ENCODE measurements at regions of chr12 and their contacts with region 1.

Region 1: GRCh38 chr12:64392221-64392620 is 1.7 kb upstream of the C12orf56 start:
- DNase-seq: no peak
- ATAC-seq: no peak
- H3K4me3 Mint-ChIP-seq: no peak overlapping the region
- H3K27ac Mint-ChIP-seq: no peak overlapping the region
- H3K4me1 Mint-ChIP-seq: peaks cover 10% of the 10 kb centered on the region
- H3K27me3 Mint-ChIP-seq: peaks cover 5% of the 10 kb centered on the region

Region 2: DNA sequence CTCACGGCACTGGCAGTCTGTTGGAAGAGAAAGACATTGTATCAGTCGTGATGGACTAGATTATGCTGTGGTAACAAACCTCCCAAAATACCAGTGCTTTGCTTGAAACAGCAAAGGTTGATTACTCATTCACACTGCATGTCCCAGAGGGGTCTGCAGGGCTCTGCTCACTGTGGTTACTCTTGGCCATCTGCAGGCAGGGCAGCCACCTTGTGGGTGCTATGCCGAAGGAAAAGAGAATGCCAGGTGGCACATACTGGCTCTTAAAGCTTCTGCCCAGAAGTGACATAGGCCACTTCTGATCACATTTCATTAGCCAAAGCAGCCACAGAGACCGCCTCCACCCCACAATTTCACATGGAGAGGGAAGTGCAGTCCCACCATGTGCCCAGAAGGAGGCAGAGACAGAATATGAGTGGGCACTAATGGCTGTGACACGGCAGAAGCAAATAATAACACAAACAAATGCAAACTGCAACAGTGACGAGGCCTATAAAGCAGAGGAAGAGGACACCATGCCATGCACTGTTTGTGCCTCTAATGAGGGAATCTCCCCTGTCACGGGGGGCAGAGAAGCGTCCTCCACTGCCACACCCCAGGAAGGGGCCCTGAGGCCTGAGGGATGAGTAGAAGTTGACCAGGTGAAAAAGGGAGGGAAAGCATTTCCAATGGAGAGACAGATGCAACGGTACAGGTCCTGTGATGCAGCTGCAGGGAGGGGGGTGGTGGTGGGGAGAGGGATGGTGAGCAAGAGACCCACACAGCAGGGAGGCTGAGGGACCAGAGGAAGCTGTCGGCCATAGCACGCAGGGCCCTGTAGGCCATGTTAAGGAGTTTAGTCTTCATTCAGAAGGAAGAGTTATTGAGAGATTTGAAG is 118.5 kb before region 1 on chr12:
- CTCF ChIA-PET with region 1: interaction called, 3 read pairs
- POLR2A ChIA-PET with region 1: no interaction called
- intact Hi-C with region 1: loop called (anchors 1 kb)
- DNase-seq: peak; percentile 44
- ATAC-seq: peak; percentile 39
- H3K4me3 Mint-ChIP-seq: no peak overlapping the region
- H3K27ac Mint-ChIP-seq: no peak overlapping the region
- H3K4me1 Mint-ChIP-seq: no peaks in the 10 kb centered on the region
- H3K27me3 Mint-ChIP-seq: no peaks in the 10 kb centered on the region

Region 3: GRCh38 chr12:64293654-64294364 is 98.4 kb before region 1 on chr12:
- CTCF ChIA-PET with region 1: no interaction called
- POLR2A ChIA-PET with region 1: no interaction called
- intact Hi-C with region 1: no loop called
- DNase-seq: no peak
- ATAC-seq: peak; percentile 26
- H3K4me3 Mint-ChIP-seq: no peak overlapping the region
- H3K27ac Mint-ChIP-seq: no peak overlapping the region
- H3K4me1 Mint-ChIP-seq: peaks cover 12% of the 10 kb centered on the region
- H3K27me3 Mint-ChIP-seq: peaks cover 14% of the 10 kb centered on the region

Region 4: DNA sequence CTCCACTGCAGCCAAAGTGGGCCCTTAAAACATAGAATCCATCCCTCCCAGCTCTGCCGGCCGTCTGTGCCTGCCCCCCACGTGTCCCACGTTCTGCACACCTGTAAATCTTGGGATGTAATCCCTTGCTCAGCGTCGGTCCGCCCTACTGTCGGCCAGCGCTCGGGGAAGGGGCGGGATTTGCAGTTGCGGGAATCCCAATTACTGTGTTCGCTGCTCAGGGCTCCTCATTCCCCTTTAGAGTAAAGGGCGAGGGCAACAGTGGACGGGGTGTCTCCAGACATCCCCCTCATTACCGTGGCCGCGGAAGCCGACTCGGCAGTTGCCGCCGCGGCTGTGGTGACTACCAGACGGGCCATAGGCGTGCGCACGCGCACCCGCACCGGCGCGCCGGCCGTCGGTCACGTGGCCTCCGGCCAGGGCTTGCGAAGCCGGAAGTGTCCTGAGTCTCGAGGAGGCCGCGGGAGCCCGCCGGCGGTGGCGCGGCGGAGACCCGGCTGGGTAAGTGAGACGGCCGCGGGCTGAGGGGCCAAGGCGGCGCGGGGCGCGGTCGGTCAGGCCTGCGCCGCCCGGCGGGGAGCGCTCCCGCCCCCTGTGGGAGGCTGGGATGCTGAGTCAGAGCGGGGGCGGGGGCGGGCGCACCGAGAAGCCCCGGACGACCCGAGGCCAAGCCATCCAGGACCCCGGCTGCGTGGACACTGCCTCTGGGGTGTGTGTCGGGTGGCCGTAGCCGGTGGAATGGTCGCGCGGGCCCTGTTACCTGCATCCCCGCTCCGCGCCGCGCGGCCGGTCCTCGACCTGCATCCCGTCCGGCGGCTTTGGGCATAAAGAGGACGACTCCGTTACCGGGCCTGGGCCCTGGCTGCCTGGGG is 59.7 kb after region 1 on chr12 and contains the start of gene TBK1:
- CTCF ChIA-PET with region 1: no interaction called
- POLR2A ChIA-PET with region 1: no interaction called
- intact Hi-C with region 1: no loop called
- DNase-seq: peak; percentile 75
- ATAC-seq: peak; percentile 64
- H3K4me3 Mint-ChIP-seq: peak within 1 kb of the TSS; percentile 89
- H3K27ac Mint-ChIP-seq: peak within 1 kb of the TSS; percentile 98
- H3K4me1 Mint-ChIP-seq: peaks cover 40% of the 10 kb centered on the region
- H3K27me3 Mint-ChIP-seq: no peaks in the 10 kb centered on the region
- total RNA-seq, gene TBK1: 14.0 to 15.4 TPM

Region 5: DNA sequence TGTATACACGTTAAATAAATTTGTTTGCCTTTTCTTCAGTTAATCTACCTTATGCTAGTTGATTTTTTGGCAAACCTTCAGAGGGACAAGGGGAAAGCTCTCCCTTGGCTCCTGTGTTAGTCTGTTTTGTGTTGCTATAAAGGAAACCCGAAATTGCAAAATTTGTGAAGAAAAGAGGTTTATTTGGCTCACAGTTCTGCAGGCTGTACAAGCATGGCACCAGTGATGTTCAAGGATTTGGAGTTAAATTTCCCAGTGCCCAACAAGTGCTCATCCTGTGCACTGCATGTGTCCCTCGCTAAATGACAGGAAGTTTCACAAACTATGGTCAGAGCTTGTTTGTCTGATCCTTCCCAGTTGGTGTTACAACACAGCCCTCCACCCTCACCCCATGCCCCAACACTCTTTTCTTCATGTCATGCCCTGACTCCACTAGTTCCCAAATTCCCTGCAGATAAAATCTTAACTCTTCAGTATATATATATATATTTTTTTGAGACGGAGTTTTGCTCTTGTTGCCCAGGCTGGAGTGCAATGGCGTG is 204.1 kb after region 1 on chr12:
- CTCF ChIA-PET with region 1: no interaction called
- POLR2A ChIA-PET with region 1: no interaction called
- intact Hi-C with region 1: loop called in 1 of 2 experiments (anchors 5 kb)
- DNase-seq: no peak
- ATAC-seq: no peak
- H3K4me3 Mint-ChIP-seq: no peak overlapping the region
- H3K27ac Mint-ChIP-seq: no peak overlapping the region
- H3K4me1 Mint-ChIP-seq: peaks cover 39% of the 10 kb centered on the region
- H3K27me3 Mint-ChIP-seq: no peaks in the 10 kb centered on the region